ENCODE measurements at regions of chr6 and their contacts with region 1.

Region 1: DNA sequence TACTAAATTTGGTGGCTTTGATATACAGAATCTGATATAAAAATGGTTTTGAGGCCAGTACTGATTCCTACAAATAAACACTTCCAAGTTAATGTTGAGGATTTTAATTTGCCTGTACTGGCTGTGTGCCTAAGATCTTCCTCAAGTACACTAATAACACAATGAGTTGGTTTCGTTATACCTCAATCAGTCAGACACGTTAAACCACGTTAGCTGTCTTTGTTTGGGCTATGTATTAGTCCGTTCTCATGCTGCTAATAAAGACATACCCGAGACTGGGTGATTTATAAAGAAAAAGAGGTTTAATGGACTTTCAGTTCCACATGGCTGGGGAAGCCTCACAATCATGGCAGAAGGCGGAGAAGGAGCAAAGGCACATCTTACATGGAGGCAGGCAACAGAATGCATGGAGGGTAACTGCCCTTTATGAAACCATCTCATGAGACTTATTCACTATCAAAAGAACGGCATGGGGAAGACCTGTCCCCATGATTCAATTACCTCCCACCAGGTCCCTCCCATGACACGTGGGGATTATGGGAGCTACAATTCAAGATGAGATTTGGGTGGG is 46.2 kb downstream of the NT5E start:
- DNase-seq: no peak
- H3K4me3 ChIP-seq: no peak overlapping the region
- H3K27ac ChIP-seq: no peak overlapping the region
- H3K4me1 ChIP-seq: no peaks in the 10 kb centered on the region
- CTCF ChIP-seq: no peak

Region 2: DNA sequence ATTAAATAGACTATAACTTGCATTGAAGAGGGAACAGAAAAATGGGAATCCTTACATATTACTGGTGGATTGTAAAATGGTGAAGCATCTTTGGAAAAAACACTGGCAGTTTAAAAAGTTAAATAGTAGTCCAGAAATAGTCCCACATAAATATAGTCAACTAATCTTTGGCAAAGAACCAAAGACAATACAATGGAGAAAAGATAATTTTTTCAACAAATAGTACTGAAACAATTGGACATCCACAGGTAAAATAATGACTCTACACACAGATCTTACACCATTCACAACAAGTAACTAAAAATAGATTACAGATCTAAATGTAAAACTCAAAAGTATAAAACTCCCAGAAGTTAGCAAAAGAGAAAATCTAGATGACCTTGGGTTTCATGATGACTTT is 1009.6 kb before region 1 on chr6:
- CTCF ChIA-PET with region 1: no interaction called
- POLR2A ChIA-PET with region 1: no interaction called
- intact Hi-C with region 1: no loop called
- DNase-seq: no peak
- H3K4me3 ChIP-seq: no peak overlapping the region
- H3K27ac ChIP-seq: no peak overlapping the region
- H3K4me1 ChIP-seq: no peaks in the 10 kb centered on the region
- CTCF ChIP-seq: no peak

Region 3: DNA sequence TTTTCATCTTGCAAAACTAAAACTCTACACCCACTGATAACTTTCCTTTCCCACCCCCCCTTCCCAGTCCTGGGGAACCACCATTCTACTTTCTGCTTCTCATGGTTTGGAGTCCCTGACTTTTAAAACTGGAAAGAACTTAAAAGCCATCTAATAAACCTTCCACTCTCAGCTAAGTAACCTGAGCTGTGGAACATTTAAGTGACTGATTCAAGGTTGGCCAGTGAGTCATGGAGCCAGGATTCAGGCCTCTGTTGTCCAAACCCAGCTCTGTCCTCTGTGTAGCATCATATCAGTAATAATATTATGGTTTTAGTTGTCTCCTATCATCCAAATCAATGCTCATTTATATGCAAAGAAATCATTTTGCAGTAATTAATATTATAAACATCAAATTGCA is 222.2 kb before region 1 on chr6:
- CTCF ChIA-PET with region 1: no interaction called
- POLR2A ChIA-PET with region 1: no interaction called
- intact Hi-C with region 1: no loop called
- DNase-seq: no peak
- H3K4me3 ChIP-seq: no peak overlapping the region
- H3K27ac ChIP-seq: no peak overlapping the region
- H3K4me1 ChIP-seq: no peaks in the 10 kb centered on the region
- CTCF ChIP-seq: no peak

Region 4: GRCh38 chr6:85482905-85483700 is 13.0 kb before region 1 on chr6:
- CTCF ChIA-PET with region 1: interaction called, 3 read pairs
- POLR2A ChIA-PET with region 1: interaction called, 4 read pairs
- intact Hi-C with region 1: loop called (anchors 1 kb)
- DNase-seq: peak; percentile 71
- H3K4me3 ChIP-seq: no peak overlapping the region
- H3K27ac ChIP-seq: no peak overlapping the region
- H3K4me1 ChIP-seq: no peaks in the 10 kb centered on the region
- CTCF ChIP-seq: peak; percentile 99

Region 5: GRCh38 chr6:85628353-85628752 is 132.3 kb after region 1 on chr6:
- CTCF ChIA-PET with region 1: no interaction called
- POLR2A ChIA-PET with region 1: no interaction called
- intact Hi-C with region 1: no loop called
- DNase-seq: no peak
- H3K4me3 ChIP-seq: no peak overlapping the region
- H3K27ac ChIP-seq: no peak overlapping the region
- H3K4me1 ChIP-seq: peaks cover 14% of the 10 kb centered on the region
- CTCF ChIP-seq: no peak